ENCODE measurements at regions of chr20 and their contacts with region 1.

Region 1: DNA sequence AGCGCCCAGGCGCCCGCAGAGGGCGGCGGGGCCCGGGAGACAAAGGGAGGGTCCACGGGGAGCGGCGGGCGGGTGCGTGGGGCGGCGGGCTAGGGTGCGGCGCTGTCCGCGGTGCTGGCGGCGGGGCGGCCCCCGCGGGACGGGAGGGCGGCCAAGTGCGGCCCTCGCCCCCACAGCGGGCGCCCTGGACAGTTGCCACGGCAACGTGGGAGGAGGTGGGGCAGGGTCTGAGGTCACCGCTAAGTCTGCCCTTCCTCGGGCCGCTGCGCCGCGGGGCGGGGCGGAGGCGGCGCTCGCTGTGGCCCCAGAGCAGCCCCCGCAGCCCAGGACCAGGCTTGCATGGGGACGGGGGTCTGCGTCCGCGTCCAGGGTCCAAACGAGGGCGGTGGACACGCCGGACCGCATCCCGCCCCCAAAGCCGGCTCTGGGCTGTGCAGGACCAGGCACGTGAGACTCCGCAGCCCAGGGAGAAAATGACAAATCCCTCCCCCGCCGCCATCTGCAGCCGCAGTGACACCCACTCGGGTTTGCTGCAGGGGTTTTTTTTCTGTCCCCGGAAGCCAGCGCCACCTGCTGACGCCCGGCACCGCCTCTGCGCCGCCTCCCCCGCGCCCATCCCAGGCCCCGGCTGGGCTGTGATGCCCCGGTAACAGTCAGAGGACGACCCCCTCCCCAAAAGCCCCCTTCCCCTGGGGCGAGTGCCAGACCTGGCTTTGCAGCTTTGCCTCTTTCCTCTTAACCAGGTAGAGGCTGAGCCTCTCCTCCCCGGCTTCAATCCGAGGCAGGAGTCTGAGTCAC is 36.8 kb downstream of the YTHDF1 start:
- DNase-seq: peak; percentile 39
- ATAC-seq: peak; percentile 61
- H3K4me3 ChIP-seq: no peak overlapping the region
- H3K27ac ChIP-seq: no peak overlapping the region
- H3K4me1 ChIP-seq: no peaks in the 10 kb centered on the region; the same call in 1 of the 2 replicates
- H3K27me3 ChIP-seq: peaks cover 48% of the 10 kb centered on the region
- CTCF ChIP-seq: peak; percentile 82

Region 2: GRCh38 chr20:63056236-63056948 is 122.7 kb before region 1 on chr20:
- CTCF ChIA-PET with region 1: no interaction called
- POLR2A ChIA-PET with region 1: no interaction called
- intact Hi-C with region 1: loop called (anchors 2 kb)
- DNase-seq: peak; percentile 20
- ATAC-seq: peak; percentile 45
- H3K4me3 ChIP-seq: no peak overlapping the region
- H3K27ac ChIP-seq: no peak overlapping the region
- H3K4me1 ChIP-seq: no peaks in the 10 kb centered on the region; the same call in 1 of the 2 replicates
- H3K27me3 ChIP-seq: peaks cover 39% of the 10 kb centered on the region
- CTCF ChIP-seq: peak; percentile 90

Region 3: DNA sequence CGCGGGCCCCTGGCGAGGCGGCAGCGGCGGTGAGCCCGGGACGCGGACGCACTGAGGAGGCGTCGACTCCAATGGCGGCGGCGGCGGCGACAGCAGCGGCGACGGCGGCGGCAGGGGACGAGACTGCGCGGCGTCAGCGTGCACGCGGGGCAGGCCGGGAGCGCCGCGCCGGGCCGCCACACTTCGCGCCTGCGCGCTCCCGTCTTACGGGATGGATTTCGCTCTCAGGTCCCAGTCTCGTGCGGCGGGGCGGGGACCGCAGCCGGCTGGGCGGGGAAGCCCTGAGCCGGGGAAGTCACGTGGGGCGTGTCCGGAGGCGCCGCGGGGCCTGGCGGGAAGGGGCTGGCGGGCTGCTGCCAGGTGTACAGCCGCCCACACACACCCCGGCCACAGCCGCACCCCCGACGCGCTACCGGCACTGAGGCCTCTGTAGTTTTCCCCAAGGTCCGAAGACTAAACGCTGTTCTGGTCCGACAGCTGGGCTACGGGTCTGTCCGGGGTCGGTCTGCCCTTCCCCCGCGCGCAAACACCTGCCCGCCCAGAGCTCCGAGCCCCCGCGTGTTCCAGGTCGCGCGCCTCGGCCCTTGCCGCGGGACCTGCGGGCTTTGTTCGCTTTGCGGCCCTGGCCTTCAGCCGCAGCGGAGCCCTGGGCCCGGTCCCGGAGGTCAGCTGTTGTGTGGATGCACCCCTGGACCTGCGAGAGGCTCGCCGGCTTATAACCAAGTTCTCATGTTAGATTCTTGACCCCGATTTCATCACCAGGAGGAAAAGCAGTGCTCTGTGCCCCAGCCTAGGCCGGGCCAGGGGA is 37.2 kb after region 1 on chr20 and contains the start of gene YTHDF1:
- CTCF ChIA-PET with region 1: interaction called, 3 read pairs
- POLR2A ChIA-PET with region 1: no interaction called
- intact Hi-C with region 1: loop called (anchors 2 kb)
- DNase-seq: peak; percentile 97
- ATAC-seq: peak; percentile 89
- H3K4me3 ChIP-seq: peak within 1 kb of the TSS; percentile 100
- H3K27ac ChIP-seq: peak within 1 kb of the TSS; percentile 31
- H3K4me1 ChIP-seq: peaks cover 36% of the 10 kb centered on the region
- H3K27me3 ChIP-seq: no peaks in the 10 kb centered on the region
- CTCF ChIP-seq: no peak
- total RNA-seq, gene YTHDF1: 30.0 and 34.0 TPM in 2 replicates

Region 4: GRCh38 chr20:63230800-63231268 is 51.7 kb after region 1 on chr20:
- CTCF ChIA-PET with region 1: no interaction called
- POLR2A ChIA-PET with region 1: no interaction called
- intact Hi-C with region 1: loop called (anchors 5 kb)
- DNase-seq: peak; percentile 58
- ATAC-seq: peak; percentile 55
- H3K4me3 ChIP-seq: no peak overlapping the region
- H3K27ac ChIP-seq: no peak overlapping the region
- H3K4me1 ChIP-seq: peaks cover 32% of the 10 kb centered on the region
- H3K27me3 ChIP-seq: no peaks in the 10 kb centered on the region
- CTCF ChIP-seq: peak; percentile 69